Activated naive CD4-positive, alpha-beta T cell treated with anti-CD3 and anti-CD28 coated beads for 36 hours (primary cell): ENCODE measurements at regions of chr5 and their contacts with region 1.

Region 1: GRCh38 chr5:126656396-126657007 is 55.8 kb downstream of the PHAX start:
- DNase-seq: peak; percentile 48
- H3K4me3 Mint-ChIP-seq: no peak overlapping the region
- H3K27ac Mint-ChIP-seq: no peak overlapping the region
- H3K4me1 Mint-ChIP-seq: peaks cover 4% of the 10 kb centered on the region
- H3K27me3 Mint-ChIP-seq: no peaks in the 10 kb centered on the region

Region 2: GRCh38 chr5:126143622-126144021 is 512.9 kb before region 1 on chr5:
- CTCF ChIA-PET with region 1: no interaction called
- intact Hi-C with region 1: no loop called
- DNase-seq: no peak
- H3K4me3 Mint-ChIP-seq: no peak overlapping the region
- H3K27ac Mint-ChIP-seq: no peak overlapping the region
- H3K4me1 Mint-ChIP-seq: no peaks in the 10 kb centered on the region
- H3K27me3 Mint-ChIP-seq: no peaks in the 10 kb centered on the region

Region 3: GRCh38 chr5:126477294-126478117 is 179.0 kb before region 1 on chr5:
- CTCF ChIA-PET with region 1: no interaction called
- intact Hi-C with region 1: no loop called
- DNase-seq: no peak
- H3K4me3 Mint-ChIP-seq: no peak overlapping the region
- H3K27ac Mint-ChIP-seq: no peak overlapping the region
- H3K4me1 Mint-ChIP-seq: peaks cover under 1% of the 10 kb centered on the region
- H3K27me3 Mint-ChIP-seq: no peaks in the 10 kb centered on the region

Region 4: DNA sequence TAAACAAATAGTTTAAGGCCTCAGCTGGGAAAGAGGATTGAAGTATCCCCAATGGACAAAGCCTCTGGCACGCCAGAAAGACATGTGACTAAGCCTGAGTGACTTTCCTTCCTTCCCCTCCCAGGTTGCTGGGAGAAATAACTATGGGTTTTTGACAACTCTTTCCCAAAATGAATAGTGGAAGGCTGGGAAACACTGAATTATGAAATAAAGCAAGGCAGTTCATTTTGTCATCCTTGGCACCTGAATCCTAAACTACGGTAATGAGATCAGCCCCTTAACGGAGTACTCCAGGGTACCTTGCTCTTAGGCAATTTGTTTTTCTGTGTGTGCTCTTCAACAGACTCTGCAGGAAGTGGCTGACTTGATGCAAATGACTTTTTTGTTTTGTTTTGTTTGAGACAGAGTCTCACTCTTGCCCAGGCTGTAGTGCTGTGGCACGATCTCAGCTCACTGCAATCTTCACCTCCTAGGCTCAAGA is 195.6 kb after region 1 on chr5:
- CTCF ChIA-PET with region 1: no interaction called
- intact Hi-C with region 1: loop called (anchors 1 kb)
- DNase-seq: peak; percentile 24
- H3K4me3 Mint-ChIP-seq: no peak overlapping the region
- H3K27ac Mint-ChIP-seq: peak overlapping the region; percentile 81
- H3K4me1 Mint-ChIP-seq: peaks cover 50% of the 10 kb centered on the region
- H3K27me3 Mint-ChIP-seq: no peaks in the 10 kb centered on the region

Region 5: DNA sequence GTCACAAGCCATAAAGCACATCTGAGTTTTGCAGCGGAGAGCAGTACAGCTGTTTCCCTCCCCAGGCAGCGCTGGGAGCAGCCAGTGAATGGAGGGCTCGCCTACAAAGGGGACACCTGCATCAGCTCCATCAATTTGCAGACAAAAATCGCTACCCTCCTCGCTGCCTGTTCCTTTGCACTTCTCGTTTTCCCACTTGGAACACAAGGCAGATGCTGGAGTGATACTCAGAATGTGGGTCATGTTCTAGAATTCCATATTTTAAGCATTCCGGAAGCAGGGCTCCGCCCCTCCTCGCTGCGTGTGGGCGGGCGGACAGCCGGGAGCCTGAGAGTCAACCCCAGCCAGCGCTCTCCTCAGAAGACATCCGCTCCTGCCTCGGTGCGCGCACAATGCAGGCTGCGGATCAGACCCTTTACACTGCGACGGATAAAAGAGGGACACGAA is 212.5 kb after region 1 on chr5:
- CTCF ChIA-PET with region 1: no interaction called
- intact Hi-C with region 1: loop called (anchors 5 kb)
- DNase-seq: peak; percentile 51
- H3K4me3 Mint-ChIP-seq: peak overlapping the region; percentile 36
- H3K27ac Mint-ChIP-seq: no peak overlapping the region
- H3K4me1 Mint-ChIP-seq: peaks cover 10% of the 10 kb centered on the region
- H3K27me3 Mint-ChIP-seq: no peaks in the 10 kb centered on the region

Region 6: GRCh38 chr5:127042593-127042992 is 386.1 kb after region 1 on chr5:
- CTCF ChIA-PET with region 1: no interaction called
- intact Hi-C with region 1: loop called (anchors 2 kb)
- DNase-seq: no peak
- H3K4me3 Mint-ChIP-seq: no peak overlapping the region
- H3K27ac Mint-ChIP-seq: no peak overlapping the region
- H3K4me1 Mint-ChIP-seq: no peaks in the 10 kb centered on the region
- H3K27me3 Mint-ChIP-seq: no peaks in the 10 kb centered on the region

Region 7: DNA sequence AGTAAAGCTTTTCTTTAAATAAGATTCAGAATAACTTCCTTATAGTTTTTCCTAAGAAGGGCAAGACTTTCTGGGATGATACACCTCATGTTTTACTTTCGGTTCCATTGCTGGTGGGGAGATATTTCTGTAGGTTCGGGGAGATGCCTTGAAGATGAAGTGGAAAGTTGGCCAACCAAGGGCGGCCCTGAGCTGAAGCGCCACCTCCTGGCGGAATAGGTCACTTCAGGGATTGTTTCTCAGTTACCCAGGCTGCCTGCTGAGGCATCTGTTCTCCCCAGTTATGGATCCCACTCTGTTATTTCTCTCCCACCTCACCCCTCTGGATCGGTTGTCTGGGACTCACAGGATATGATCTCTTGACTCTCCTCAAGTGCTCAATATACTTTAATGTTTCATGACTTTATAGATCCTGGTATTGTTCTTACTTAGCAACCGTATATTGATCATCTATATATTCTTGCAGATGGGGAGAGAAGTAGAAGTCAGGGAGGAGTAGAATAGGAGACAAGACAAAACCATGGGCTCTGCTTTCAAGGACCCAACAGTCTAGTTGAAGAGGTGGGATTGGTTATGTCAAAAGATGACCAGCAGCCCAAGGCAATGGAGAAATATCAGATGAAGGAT is 657.5 kb after region 1 on chr5:
- CTCF ChIA-PET with region 1: interaction called, 3 read pairs
- intact Hi-C with region 1: loop called (anchors 1 kb)
- DNase-seq: peak; percentile 81
- H3K4me3 Mint-ChIP-seq: no peak overlapping the region
- H3K27ac Mint-ChIP-seq: no peak overlapping the region
- H3K4me1 Mint-ChIP-seq: peaks cover 4% of the 10 kb centered on the region
- H3K27me3 Mint-ChIP-seq: peaks cover under 1% of the 10 kb centered on the region

Region 8: GRCh38 chr5:127441799-127442484 is 785.4 kb after region 1 on chr5:
- CTCF ChIA-PET with region 1: no interaction called
- intact Hi-C with region 1: loop called (anchors 2 kb)
- DNase-seq: no peak
- H3K4me3 Mint-ChIP-seq: no peak overlapping the region
- H3K27ac Mint-ChIP-seq: no peak overlapping the region
- H3K4me1 Mint-ChIP-seq: no peaks in the 10 kb centered on the region
- H3K27me3 Mint-ChIP-seq: peaks cover 4% of the 10 kb centered on the region

Region 9: DNA sequence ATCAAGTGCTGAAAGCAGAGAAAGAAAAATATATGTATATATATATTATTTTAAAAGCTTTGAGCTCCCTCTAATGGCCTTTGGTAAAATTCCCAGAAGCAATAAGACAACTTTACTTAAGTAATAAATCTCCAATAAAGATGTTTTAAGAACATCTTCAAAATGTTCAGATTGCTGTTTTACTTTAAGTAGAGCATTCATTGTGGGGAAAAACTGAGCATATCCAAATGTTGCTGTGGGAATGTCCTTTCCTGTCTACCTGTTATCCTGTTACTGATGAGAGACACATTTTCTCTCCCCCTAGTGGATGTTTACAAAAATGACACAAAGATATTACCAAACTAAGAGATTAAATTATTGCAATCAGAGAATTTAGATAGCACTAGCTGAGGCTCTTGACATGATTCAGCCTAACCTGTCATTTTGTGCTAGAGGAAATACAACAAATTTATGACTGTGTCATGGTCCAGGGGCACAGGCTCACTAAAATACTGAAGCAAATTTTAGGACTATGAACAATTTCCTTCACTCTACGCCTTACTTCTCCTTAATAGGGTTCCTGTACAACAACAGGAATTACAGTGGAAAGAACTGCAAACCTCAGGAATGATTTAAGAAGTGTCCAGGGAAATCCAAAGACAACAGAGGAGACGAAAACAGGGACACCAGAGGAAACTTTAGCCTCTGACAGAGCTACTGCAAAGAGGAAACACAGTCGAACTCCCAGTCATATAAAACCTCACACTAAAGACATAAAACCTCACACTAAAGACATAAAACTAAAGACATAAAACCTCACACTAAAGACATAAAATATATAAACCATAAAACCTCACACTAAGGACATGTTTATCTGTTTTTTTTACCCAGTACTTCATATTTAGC is 836.6 kb after region 1 on chr5:
- CTCF ChIA-PET with region 1: interaction called, 4 read pairs
- intact Hi-C with region 1: loop called (anchors 1 kb)
- DNase-seq: no peak
- H3K4me3 Mint-ChIP-seq: no peak overlapping the region
- H3K27ac Mint-ChIP-seq: no peak overlapping the region
- H3K4me1 Mint-ChIP-seq: no peaks in the 10 kb centered on the region
- H3K27me3 Mint-ChIP-seq: peaks cover 3% of the 10 kb centered on the region